ENCODE measurements at regions of chr1 and their contacts with region 1.

Region 1: GRCh38 chr1:29706956-29707355 is 470.6 kb downstream of the PTPRU start:
- DNase-seq: peak; percentile 53
- H3K4me3 Mint-ChIP-seq: no peak overlapping the region
- H3K27ac Mint-ChIP-seq: no peak overlapping the region
- H3K4me1 Mint-ChIP-seq: peaks cover 27% of the 10 kb centered on the region
- H3K27me3 Mint-ChIP-seq: peaks cover 48% of the 10 kb centered on the region

Region 2: DNA sequence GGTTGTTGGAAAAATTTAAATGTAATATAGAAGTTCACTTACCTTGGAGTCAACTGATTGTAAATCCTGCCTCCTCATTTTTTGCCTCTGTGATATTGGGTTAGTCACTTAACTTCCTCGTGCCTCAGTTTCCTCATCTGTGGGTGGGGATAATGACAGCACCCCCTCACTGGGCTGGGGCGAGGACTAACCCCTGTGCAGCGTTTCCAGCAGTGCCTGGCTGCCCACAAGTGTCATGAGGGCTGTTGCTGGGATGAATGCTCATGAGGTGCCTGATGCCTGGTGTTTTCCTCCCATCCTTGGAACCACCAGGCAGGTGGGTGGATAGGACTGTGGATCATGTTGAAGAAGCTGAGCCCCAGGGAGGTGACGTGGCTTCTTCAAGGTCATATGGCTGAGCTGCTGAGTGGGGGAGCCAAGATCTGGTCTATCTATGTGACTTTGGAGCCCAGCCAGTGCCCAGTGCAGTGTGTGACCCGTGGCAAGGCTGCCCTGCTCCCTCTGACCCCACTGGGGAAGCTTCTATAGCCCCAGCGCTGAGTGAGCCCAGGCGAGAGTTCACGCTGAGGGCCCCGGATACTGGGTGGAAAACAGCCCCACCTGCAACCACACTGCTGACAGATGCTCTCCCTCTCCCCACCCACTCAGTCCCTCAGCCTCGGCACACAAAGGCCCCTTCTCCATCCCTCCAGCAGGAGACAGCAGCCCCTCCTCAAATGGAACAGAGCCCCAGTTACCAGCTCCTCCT is 24.6 kb before region 1 on chr1:
- CTCF ChIA-PET with region 1: no interaction called
- intact Hi-C with region 1: no loop called
- DNase-seq: no peak
- H3K4me3 Mint-ChIP-seq: no peak overlapping the region
- H3K27ac Mint-ChIP-seq: no peak overlapping the region
- H3K4me1 Mint-ChIP-seq: no peaks in the 10 kb centered on the region
- H3K27me3 Mint-ChIP-seq: peaks cover under 1% of the 10 kb centered on the region

Region 3: GRCh38 chr1:29849038-29849750 is 142.2 kb after region 1 on chr1:
- CTCF ChIA-PET with region 1: interaction called, 3 read pairs
- intact Hi-C with region 1: loop called (anchors 5 kb)
- DNase-seq: peak; percentile 68
- H3K4me3 Mint-ChIP-seq: no peak overlapping the region
- H3K27ac Mint-ChIP-seq: no peak overlapping the region
- H3K4me1 Mint-ChIP-seq: no peaks in the 10 kb centered on the region
- H3K27me3 Mint-ChIP-seq: peaks cover 20% of the 10 kb centered on the region

Measured in activated naive CD4-positive, alpha-beta T cell treated with anti-CD3 and anti-CD28 coated beads for 36 hours (primary cell).